ENCODE measurements at regions of chr3 and their contacts with region 1.

Region 1: DNA sequence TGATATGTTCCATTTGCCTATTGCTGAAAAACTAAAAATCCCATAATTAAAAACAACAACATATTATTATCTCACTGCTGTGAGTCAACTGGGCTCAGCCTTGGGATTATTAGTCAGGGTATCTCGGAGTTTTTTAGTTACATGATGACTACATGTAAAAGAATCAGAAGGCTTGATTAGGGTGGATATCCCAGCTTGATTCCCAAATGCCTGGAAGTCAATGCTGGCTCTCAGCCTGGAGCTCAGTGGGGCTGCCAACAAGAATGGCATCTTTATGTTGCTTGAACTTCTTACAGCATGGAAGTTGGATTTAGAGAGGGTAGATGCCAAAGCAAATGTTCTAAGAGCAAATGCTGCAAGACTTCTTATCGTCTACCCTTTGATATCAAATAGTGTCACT is 278.5 kb downstream of the PLOD2 start:
- DNase-seq: no peak
- H3K4me3 ChIP-seq: no peak overlapping the region
- H3K4me3 Mint-ChIP-seq: no peak overlapping the region
- H3K27ac Mint-ChIP-seq: no peak overlapping the region
- H3K4me1 ChIP-seq: no peaks in the 10 kb centered on the region
- H3K4me1 Mint-ChIP-seq: no peaks in the 10 kb centered on the region
- H3K27me3 ChIP-seq: no peaks in the 10 kb centered on the region
- H3K27me3 Mint-ChIP-seq: no peaks in the 10 kb centered on the region
- CTCF ChIP-seq: no peak

Region 2: DNA sequence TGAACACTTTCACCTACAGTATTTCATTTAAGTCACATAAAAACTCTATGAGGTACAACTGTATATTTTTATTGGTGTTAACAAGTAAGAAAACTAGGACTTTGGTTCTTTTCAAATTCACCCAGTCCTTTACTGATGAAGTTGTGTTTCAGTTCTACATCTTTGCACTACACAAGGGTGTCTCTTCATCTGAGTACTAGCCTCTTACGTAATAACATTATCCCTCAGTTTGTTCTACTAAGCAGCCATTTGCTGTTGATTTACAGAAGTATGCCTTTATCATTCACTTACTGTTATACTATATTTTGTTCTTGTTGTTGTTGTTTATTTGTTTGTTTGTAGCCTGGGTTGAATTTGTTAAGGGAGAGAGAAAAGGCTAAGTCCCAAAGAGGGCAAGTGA is 33.3 kb before region 1 on chr3:
- CTCF ChIA-PET with region 1: no interaction called
- POLR2A ChIA-PET with region 1: no interaction called
- intact Hi-C with region 1: loop called (anchors 1 kb)
- DNase-seq: no peak
- H3K4me3 ChIP-seq: no peak overlapping the region
- H3K4me3 Mint-ChIP-seq: no peak overlapping the region
- H3K27ac Mint-ChIP-seq: no peak overlapping the region
- H3K4me1 ChIP-seq: no peaks in the 10 kb centered on the region
- H3K4me1 Mint-ChIP-seq: no peaks in the 10 kb centered on the region
- H3K27me3 ChIP-seq: no peaks in the 10 kb centered on the region
- H3K27me3 Mint-ChIP-seq: peaks cover 4% of the 10 kb centered on the region
- CTCF ChIP-seq: no peak

Measured in Caco-2 (cell line).